Psoas muscle (tissue), 8 donors: ENCODE measurements at regions of chr15 and their contacts with region 1.

Region 1: DNA sequence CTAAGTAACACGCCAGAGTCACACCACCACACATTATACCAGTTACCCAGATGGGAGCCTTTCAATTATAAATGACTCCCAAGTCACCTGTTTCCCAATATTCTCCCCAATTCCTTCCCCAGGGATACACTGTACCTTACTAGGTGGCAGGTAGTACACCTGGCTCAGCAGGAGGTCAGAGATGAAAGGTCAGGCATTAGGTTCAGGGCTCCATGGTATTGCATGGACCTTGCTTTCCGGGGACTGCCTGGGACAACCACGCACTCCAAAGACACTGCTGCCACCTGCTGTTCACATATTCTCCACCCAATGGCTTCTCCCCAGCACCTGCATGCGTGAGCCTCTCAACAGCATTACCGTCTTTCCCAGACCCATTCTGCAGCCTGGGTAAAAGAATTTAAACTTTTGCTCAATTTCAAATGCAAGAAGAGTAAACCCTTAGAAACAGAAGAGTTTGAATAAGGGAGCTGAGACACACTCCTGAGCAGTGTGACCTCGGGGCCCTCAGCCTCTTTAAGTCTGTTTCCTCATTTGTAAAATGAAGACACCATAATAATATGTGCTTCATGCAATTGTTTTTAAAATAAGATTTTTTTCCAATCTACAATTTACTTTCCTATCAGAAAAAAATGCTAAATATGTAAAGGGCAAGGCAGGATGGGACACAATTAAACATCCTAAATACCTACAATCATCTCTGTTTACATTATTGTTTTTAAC is 28.0 kb upstream of the LACTB start:
- DNase-seq: peak; percentile 76 to 85
- ATAC-seq: peak; percentile 94 to 98 (median 96)
- H3K4me3 ChIP-seq: no peak overlapping the region
- H3K27ac ChIP-seq: no peak overlapping the region
- H3K4me1 ChIP-seq: no peaks in the 10 kb centered on the region
- H3K27me3 ChIP-seq: no peaks in the 10 kb centered on the region
- CTCF ChIP-seq: peak; percentile 86

Region 2: GRCh38 chr15:62782039-62782791 is 311.4 kb before region 1 on chr15:
- intact Hi-C with region 1: loop called (anchors 2 to 10 kb)
- DNase-seq: peak; percentile 57 to 71
- ATAC-seq: peak; percentile 88 to 90 (median 89)
- H3K4me3 ChIP-seq: no peak overlapping the region
- H3K27ac ChIP-seq: no peak overlapping the region
- H3K4me1 ChIP-seq: no peaks in the 10 kb centered on the region
- H3K27me3 ChIP-seq: no peaks in the 10 kb centered on the region
- CTCF ChIP-seq: peak; percentile 66

Region 3: GRCh38 chr15:62847900-62848489 is 245.7 kb before region 1 on chr15:
- intact Hi-C with region 1: loop called (anchors 1 to 2 kb)
- DNase-seq: peak; percentile 75 to 86
- ATAC-seq: peak; percentile 71 to 91 (median 80)
- H3K4me3 ChIP-seq: no peak overlapping the region
- H3K27ac ChIP-seq: no peak overlapping the region
- H3K4me1 ChIP-seq: peaks cover 9% of the 10 kb centered on the region
- H3K27me3 ChIP-seq: no peaks in the 10 kb centered on the region
- CTCF ChIP-seq: peak; percentile 82

Region 4: GRCh38 chr15:62995047-62995674 is 98.5 kb before region 1 on chr15:
- intact Hi-C with region 1: loop called (anchors 5 to 10 kb)
- DNase-seq: no peak
- ATAC-seq: no peak
- H3K4me3 ChIP-seq: no peak overlapping the region
- H3K27ac ChIP-seq: no peak overlapping the region
- H3K4me1 ChIP-seq: no peaks in the 10 kb centered on the region
- H3K27me3 ChIP-seq: no peaks in the 10 kb centered on the region
- CTCF ChIP-seq: no peak

Region 5: GRCh38 chr15:63048115-63048775 is 45.4 kb before region 1 on chr15:
- intact Hi-C with region 1: loop called (anchors 1 to 5 kb)
- DNase-seq: peak; percentile 92 to 97
- ATAC-seq: peak; percentile 80 to 95 (median 84)
- H3K4me3 ChIP-seq: peak overlapping the region; percentile 75
- H3K27ac ChIP-seq: peak overlapping the region; percentile 94
- H3K4me1 ChIP-seq: peaks cover 67% of the 10 kb centered on the region
- H3K27me3 ChIP-seq: no peaks in the 10 kb centered on the region
- CTCF ChIP-seq: peak; percentile 94